SK-N-SH (cell line): ENCODE measurements at regions of chr5 and their contacts with region 1.

Region 1: DNA sequence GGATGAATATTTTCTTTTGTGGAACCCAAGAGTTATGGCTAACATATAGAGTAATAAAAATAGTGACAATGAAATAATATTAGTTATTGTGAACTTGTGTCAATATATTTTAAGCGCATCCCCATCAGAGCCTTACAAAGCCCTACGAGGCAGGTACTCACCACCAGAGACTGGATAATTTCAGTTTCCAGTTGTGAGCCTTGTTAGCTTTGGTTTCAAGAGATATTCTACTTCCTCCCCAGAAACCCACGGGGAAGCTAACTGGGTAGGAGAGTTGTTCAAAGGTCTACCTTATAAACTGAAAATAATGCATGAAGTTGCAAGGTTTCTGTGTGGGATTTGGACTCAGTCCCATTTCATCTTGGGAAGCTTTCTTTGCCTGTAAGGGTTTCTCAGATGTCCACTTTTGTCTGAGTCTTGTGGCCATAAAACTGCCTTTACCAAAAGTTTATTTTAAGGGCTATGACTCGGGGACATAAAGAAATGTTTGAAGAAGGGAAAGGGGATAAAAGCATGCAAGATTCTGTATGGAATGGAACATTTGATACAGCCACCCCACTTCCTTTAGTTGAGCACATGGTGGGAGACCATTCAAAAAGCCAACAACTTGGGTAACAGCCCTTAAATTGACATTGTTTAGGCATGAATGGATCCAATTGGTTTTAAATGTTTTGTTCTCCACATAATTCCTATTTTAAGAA is 57.4 kb upstream of the ANKRD55 start:
- DNase-seq: no peak
- H3K4me3 ChIP-seq: no peak overlapping the region
- H3K27ac ChIP-seq: peak overlapping the region in 1 of 2 experiments; percentile 9; a peak in 1 of 4 replicates
- H3K4me1 ChIP-seq: peaks cover 9 to 18% of the 10 kb centered on the region in 2 experiments
- H3K27me3 ChIP-seq: no peaks in the 10 kb centered on the region
- CTCF ChIP-seq: no peak
- EP300 ChIP-seq: no peak
- RAD21 ChIP-seq: no peak

Region 2: GRCh38 chr5:56303515-56303914 is 13.0 kb after region 1 on chr5:
- CTCF ChIA-PET with region 1: interaction called, 19 read pairs
- POLR2A ChIA-PET with region 1: no interaction called
- DNase-seq: no peak
- H3K4me3 ChIP-seq: no peak overlapping the region
- H3K27ac ChIP-seq: peak overlapping the region in 1 of 2 experiments; percentile 100; a peak in 2 of 4 replicates
- H3K4me1 ChIP-seq: peaks cover 0 to 28% of the 10 kb centered on the region in 2 experiments; a peak in 3 of 4 replicates
- H3K27me3 ChIP-seq: no peaks in the 10 kb centered on the region
- CTCF ChIP-seq: no peak
- EP300 ChIP-seq: no peak
- RAD21 ChIP-seq: peak; percentile 41

Region 3: GRCh38 chr5:56340196-56340980 is 49.9 kb after region 1 on chr5:
- CTCF ChIA-PET with region 1: no interaction called
- POLR2A ChIA-PET with region 1: no interaction called
- DNase-seq: no peak
- H3K4me3 ChIP-seq: no peak overlapping the region
- H3K27ac ChIP-seq: no peak overlapping the region
- H3K4me1 ChIP-seq: peaks cover 0 to 2% of the 10 kb centered on the region in 2 experiments; a peak in 2 of 4 replicates
- H3K27me3 ChIP-seq: no peaks in the 10 kb centered on the region
- CTCF ChIP-seq: no peak
- EP300 ChIP-seq: no peak
- RAD21 ChIP-seq: no peak